ENCODE measurements at regions of chrX and their contacts with region 1.

Region 1: GRCh38 chrX:17242470-17242869 is 132.5 kb upstream of the NHS start:
- DNase-seq: no peak
- ATAC-seq: no peak

Region 2: DNA sequence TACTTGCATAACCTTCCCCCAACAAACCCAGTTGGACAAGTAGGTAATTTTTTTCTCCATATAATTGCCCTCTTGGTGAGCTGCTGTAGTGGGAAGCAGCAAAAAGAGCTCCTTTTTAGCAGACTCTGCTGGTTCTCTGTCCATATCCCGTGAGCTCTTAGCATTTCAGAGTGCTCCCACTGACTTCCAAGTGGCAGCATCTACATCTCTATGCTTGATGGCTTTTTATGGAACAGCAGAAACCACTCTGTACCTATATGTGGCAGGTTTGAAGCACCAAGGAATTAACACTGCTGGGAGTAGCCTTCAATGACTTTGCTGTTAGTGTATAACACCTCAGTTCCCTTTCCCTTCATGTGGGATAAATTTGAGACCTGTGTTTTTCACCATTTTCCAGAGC is 35.9 kb before region 1 on chrX:
- intact Hi-C with region 1: no loop called
- DNase-seq: no peak
- ATAC-seq: no peak

Region 3: DNA sequence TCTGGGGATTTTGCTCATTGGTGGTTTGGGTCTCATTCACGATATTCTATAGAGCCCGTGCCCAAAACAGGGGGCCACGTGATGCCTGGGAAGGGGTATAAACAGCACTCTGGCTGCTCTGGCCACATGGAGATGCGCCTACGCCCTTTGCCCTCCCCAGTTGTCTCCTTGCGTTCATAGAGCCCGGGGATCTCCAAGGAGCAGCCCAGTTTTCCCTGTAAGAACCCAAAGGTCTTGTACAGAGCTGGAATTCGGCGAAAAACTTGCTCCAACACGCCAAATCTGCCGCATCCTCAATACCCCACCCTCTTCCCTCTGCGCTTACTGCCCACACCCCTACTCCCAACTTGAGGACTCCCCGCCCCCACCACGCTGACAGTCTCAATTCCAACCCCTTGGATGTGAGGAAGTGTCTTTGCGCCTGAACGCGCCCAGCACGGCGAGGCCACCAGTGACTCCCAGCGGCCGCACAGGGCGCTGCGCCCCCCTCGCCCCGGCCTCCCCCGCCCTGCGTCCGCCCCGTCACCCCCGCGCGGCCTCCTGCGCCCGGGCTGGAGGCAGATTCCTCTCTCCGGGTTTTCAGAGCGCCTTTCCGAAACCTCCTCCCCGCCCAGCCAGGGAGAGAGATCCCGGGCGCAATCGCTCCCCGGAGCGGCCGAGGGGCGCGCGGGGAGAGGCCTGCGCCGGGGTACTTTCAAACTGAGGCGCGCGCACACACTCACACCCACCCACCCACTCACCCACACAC is 132.3 kb after region 1 on chrX and contains the start of gene NHS:
- intact Hi-C with region 1: loop called (anchors 10 kb)
- DNase-seq: peak; percentile 77
- ATAC-seq: peak; percentile 91
- total RNA-seq, gene NHS: 1.2 TPM

Region 4: DNA sequence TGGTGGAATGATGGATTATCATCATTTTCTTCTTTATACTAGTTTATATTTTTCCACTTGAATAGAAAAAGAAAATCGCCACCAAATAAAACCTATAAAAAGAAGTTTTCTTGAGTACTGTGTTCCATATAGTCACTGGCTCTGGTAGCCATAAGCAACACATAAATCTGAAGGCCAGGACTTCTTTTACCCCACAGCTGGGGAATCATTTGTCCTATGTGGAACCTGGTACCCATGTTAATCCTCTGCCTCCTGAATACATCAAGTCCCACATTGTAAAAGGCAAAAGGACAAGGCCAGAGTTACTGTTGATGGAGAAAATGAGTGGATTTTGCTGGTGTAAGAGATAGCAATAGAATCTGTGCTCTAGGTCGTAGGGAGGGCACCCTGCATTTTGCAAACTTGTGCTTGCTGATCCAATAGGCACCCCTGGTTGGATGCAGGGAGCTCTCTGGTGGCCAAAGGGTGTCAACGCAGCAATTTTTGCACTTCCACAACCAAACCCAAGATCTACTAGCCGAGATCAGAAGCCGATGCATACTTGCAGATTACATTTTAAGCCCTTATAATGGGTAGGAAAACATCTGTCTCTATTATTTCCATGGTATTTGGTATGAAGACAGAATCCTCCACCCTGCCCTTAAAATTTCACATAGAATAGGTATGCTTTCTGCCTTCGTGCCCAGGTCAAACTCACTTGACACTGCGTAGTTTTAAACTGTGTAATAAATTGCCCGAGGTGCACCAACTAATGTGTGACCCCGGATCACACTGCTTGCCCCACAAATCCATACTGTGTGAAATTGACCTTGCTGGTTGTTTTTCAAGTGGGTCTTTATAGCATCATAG is 348.6 kb after region 1 on chrX:
- intact Hi-C with region 1: loop called (anchors 5 kb)
- DNase-seq: peak; percentile 54
- ATAC-seq: peak; percentile 95

Region 5: GRCh38 chrX:17689971-17690409 is 447.5 kb after region 1 on chrX:
- intact Hi-C with region 1: loop called (anchors 5 kb)
- DNase-seq: no peak
- ATAC-seq: peak; percentile 80

Measured in Right ventricle myocardium superior (tissue), 1 donor.